ENCODE measurements at regions of chr1 and their contacts with region 1.

Region 1: DNA sequence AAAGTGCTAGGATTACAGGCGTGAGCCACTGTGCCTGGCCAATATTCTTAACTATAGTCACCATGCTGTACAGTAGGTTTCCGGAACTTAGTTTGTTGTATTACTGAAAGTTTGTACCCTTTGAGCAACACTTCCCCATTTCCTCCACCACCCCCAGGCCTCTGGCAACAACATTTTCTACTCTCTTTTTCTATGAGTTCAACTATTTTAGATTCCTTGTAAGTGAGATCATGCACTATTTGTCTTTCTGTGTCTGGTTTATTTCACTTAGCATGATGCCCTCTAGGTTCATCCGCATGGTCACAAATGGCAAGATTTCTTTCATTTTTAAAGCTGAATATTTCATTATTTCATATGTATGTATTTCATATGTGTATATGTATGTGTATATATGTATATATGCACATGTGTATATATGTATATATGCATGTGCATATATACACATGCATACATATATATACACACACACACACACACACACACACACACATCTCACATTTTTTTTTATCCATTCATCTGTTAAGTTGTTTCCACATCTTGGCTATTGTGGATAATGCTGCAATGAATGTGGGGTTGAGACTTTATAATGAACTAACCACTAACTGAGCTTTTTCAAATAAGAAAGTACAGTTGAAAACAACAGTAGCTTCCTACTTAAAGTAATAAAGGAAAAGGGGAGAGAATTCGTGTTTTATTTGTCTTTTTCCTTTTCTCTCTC is 256.8 kb upstream of the C1orf105 start:
- DNase-seq: no peak
- ATAC-seq: no peak
- H3K4me3 ChIP-seq: no peak overlapping the region
- H3K4me3 Mint-ChIP-seq: no peak overlapping the region
- H3K27ac ChIP-seq: no peak overlapping the region
- H3K27ac Mint-ChIP-seq: no peak overlapping the region
- H3K4me1 ChIP-seq: no peaks in the 10 kb centered on the region
- H3K4me1 Mint-ChIP-seq: peaks cover 0 to 3% (median 2%) of the 10 kb centered on the region in 3 donors
- H3K27me3 ChIP-seq: no peaks in the 10 kb centered on the region
- H3K27me3 Mint-ChIP-seq: no peaks in the 10 kb centered on the region

Region 2: GRCh38 chr1:171233190-171233589 is 930.5 kb before region 1 on chr1:
- CTCF ChIA-PET with region 1: no interaction called
- POLR2A ChIA-PET with region 1: no interaction called
- DNase-seq: no peak
- ATAC-seq: no peak
- H3K4me3 ChIP-seq: no peak overlapping the region
- H3K4me3 Mint-ChIP-seq: no peak overlapping the region
- H3K27ac ChIP-seq: no peak overlapping the region
- H3K27ac Mint-ChIP-seq: no peak overlapping the region
- H3K4me1 ChIP-seq: no peaks in the 10 kb centered on the region
- H3K4me1 Mint-ChIP-seq: no peaks in the 10 kb centered on the region
- H3K27me3 ChIP-seq: peaks cover 0 to 11% of the 10 kb centered on the region in 2 experiments
- H3K27me3 Mint-ChIP-seq: peaks cover 20 to 23% of the 10 kb centered on the region in 2 donors

Region 3: DNA sequence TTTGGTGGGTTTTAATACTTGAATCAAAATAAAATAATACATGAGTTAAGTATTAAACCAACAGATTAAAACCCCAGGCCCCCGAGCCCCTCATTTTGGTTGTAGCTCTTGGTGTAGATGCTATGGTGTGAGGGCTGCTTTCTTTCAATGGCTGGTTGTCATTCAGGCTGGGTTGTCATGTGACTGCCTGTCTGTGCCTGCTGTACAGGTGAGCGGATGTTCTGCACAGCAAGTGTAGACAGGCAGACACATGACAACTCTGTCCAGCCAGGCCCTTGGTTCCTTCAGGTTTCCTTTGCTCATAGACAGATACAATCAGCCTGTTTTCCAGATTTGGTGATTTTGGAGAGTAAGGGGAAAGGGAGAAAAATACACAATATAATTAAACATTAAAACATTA is 25.0 kb before region 1 on chr1:
- CTCF ChIA-PET with region 1: no interaction called
- POLR2A ChIA-PET with region 1: no interaction called
- DNase-seq: no peak
- ATAC-seq: no peak
- H3K4me3 ChIP-seq: no peak overlapping the region
- H3K4me3 Mint-ChIP-seq: no peak overlapping the region
- H3K27ac ChIP-seq: no peak overlapping the region
- H3K27ac Mint-ChIP-seq: no peak overlapping the region
- H3K4me1 ChIP-seq: no peaks in the 10 kb centered on the region
- H3K4me1 Mint-ChIP-seq: peaks cover 5 to 9% (median 5%) of the 10 kb centered on the region in 3 donors
- H3K27me3 ChIP-seq: no peaks in the 10 kb centered on the region
- H3K27me3 Mint-ChIP-seq: no peaks in the 10 kb centered on the region

Region 4: GRCh38 chr1:172350826-172351225 is 187.2 kb after region 1 on chr1:
- CTCF ChIA-PET with region 1: no interaction called
- POLR2A ChIA-PET with region 1: interaction called in 1 of 2 experiments, 12 read pairs
- DNase-seq: no peak
- ATAC-seq: no peak
- H3K4me3 ChIP-seq: no peak overlapping the region
- H3K4me3 Mint-ChIP-seq: no peak overlapping the region
- H3K27ac ChIP-seq: no peak overlapping the region
- H3K27ac Mint-ChIP-seq: no peak overlapping the region
- H3K4me1 ChIP-seq: no peaks in the 10 kb centered on the region
- H3K4me1 Mint-ChIP-seq: peaks cover 13 to 33% (median 32%) of the 10 kb centered on the region in 3 donors
- H3K27me3 ChIP-seq: no peaks in the 10 kb centered on the region
- H3K27me3 Mint-ChIP-seq: no peaks in the 10 kb centered on the region